ENCODE measurements at regions of chr16 and their contacts with region 1.

Region 1: DNA sequence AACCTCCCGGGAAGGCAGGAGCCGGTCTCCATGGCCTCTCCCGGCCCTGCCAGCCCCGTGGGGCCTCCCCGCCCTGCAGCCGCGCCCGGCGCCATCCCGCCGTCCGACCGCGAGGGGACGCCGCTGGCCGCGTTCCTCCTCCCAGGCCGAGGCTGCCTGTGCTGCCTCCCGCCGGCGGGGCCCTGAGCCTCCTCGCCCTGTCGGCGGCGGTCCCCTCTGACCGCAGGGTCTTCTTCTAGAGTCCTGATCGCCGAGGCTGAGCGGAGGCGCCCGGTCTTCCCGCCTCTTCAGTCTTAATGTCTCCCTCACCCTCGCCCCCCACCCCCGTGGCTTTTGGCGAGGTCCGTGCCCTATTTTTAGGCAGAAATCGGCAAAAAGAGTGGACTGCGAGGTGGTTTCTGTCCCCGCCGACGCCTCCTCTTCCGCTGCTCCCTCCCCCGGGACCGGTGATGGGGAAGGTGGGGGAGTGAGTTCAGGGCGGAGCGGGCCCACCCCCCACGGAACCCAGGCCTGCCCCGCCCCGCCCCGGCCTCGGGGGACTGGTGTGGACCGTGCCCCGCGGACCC is 794 bp upstream of the CPNE7 start:
- DNase-seq: no peak
- ATAC-seq: peak; percentile 90
- H3K4me3 ChIP-seq: peak overlapping the region; percentile 43 to 64
- H3K27ac ChIP-seq: peak overlapping the region; percentile 71
- H3K4me1 ChIP-seq: no peaks in the 10 kb centered on the region
- H3K27me3 ChIP-seq: no peaks in the 10 kb centered on the region
- CTCF ChIP-seq: peak; percentile 93

Region 2: DNA sequence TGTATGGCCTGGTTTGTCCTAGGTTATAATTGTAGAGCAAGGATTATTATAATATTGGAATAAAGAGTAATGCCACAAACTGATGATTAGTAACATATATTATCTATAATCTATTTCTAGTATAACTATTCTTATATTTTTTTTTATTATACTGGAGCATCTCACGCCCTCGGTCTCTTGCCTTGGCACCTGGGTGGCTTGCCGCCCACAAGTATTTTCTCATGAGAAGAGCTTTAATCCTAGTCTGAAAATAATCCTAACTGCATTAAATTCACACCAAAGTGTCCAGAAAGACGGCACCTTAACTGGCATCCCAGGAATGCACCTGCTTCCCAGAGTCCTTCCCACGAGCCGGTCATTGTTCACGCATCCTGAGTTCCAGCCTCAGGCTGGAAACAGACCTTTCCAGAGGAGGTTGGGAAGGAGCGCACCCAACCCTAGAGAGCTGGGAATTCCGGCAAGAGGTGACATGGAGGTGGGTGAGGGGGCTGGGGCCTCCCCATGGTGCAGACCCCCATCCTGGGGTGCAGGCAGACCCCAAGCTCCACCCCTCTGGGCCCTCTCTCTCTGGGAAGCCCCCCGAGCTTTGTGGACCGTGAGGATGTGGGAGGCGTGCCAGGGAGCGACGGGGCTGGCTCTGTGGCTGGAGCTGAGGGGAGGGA is 66.8 kb after region 1 on chr16:
- CTCF ChIA-PET with region 1: no interaction called
- POLR2A ChIA-PET with region 1: interaction called, 12 read pairs
- in situ Hi-C with region 1: no loop called
- intact Hi-C with region 1: loop called (anchors 5 kb)
- DNase-seq: no peak
- ATAC-seq: no peak
- H3K4me3 ChIP-seq: no peak overlapping the region
- H3K27ac ChIP-seq: no peak overlapping the region
- H3K4me1 ChIP-seq: peaks cover 7% of the 10 kb centered on the region
- H3K27me3 ChIP-seq: no peaks in the 10 kb centered on the region
- CTCF ChIP-seq: no peak

Region 3: DNA sequence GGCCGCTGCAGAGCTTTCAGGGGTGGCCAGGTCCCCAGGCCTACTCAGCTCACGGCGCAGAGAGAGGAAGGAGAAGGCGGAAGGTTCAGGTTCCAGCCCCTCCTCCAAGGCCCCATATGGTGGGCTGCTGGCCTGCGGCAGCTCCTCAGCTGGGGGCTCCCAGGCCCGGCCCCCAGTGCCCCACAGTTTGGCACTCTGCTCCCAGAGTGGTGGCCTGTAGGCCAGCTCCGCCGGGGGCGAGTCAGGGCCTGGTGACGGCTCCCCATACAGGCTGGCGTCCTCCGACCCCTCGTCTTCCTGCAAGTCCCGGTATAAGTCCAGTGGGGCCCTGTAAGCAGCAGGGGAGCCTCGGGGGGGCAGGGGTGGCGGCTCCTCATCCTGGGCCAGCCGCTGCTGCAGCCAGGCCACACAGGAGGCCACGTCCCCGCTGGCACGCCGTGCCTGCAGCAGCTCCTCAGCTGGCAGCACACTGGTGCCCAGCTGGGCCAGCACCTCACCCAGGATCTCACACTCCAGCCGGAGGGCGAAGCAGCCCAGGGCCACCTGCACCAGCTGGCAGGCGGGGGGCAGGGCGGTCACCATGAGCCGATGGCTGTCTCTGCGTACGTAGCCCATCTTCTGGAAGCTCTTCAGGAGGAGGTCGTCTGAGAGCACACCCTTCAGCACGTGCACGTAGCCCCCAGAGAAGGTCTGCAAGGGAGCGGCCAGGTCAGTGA is 123.0 kb after region 1 on chr16:
- CTCF ChIA-PET with region 1: no interaction called
- POLR2A ChIA-PET with region 1: interaction called, 12 read pairs
- in situ Hi-C with region 1: no loop called
- intact Hi-C with region 1: no loop called
- DNase-seq: no peak
- ATAC-seq: no peak
- H3K4me3 ChIP-seq: no peak overlapping the region
- H3K27ac ChIP-seq: no peak overlapping the region
- H3K4me1 ChIP-seq: peaks cover 4% of the 10 kb centered on the region; the same call in 1 of the 2 replicates
- H3K27me3 ChIP-seq: no peaks in the 10 kb centered on the region
- CTCF ChIP-seq: no peak

Region 4: DNA sequence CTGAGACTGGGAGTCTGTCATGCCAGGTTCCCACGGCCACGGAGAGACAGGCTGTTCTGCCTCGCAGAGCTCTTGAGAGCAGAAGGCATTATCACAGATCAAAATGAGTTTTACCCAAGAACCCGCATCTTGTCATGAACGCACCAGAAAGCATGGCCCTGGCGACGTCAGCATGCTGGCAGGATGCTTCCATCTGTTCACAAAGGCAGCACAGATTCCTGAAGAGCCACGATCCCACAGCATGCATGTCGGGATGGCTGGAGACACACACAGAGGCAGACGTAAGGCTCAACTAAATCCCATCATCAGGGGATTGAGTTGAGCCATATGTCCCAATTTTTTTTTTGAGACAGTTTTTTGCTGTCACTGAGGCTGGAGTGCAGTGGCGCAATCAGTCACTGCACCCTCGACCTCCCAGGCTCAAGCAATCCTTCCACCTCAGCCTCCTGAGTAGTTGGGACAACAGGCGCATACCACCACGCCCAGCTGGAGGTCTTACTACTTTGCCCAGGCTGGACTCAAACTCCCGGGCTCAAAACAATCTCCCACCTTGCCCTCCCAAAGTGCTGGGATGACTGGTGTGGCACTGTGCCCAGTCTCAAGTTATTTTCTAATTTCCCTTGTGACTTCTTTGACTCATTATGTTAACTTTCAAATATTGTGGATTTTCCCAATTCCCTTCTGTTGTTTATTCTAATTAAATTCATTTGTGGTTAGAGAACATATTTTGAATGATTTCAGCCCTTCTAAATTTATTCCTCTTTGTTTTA is 230.6 kb after region 1 on chr16:
- CTCF ChIA-PET with region 1: no interaction called
- POLR2A ChIA-PET with region 1: no interaction called
- in situ Hi-C with region 1: no loop called
- intact Hi-C with region 1: no loop called
- DNase-seq: no peak
- ATAC-seq: no peak
- H3K4me3 ChIP-seq: no peak overlapping the region
- H3K27ac ChIP-seq: no peak overlapping the region
- H3K4me1 ChIP-seq: no peaks in the 10 kb centered on the region
- H3K27me3 ChIP-seq: no peaks in the 10 kb centered on the region
- CTCF ChIP-seq: no peak

Measured in Panc1 (cell line).